ENCODE measurements at regions of chr9 and their contacts with region 1.

Region 1: GRCh38 chr9:129835021-129835871 is at the starts of genes C9orf78 and USP20:
- H3K4me3 Mint-ChIP-seq: peak within 1 kb of the TSS; percentile 88
- H3K27ac Mint-ChIP-seq: peak within 1 kb of the TSS; percentile 93
- H3K4me1 Mint-ChIP-seq: peaks cover 55% of the 10 kb centered on the region
- H3K27me3 Mint-ChIP-seq: no peaks in the 10 kb centered on the region

Region 2: DNA sequence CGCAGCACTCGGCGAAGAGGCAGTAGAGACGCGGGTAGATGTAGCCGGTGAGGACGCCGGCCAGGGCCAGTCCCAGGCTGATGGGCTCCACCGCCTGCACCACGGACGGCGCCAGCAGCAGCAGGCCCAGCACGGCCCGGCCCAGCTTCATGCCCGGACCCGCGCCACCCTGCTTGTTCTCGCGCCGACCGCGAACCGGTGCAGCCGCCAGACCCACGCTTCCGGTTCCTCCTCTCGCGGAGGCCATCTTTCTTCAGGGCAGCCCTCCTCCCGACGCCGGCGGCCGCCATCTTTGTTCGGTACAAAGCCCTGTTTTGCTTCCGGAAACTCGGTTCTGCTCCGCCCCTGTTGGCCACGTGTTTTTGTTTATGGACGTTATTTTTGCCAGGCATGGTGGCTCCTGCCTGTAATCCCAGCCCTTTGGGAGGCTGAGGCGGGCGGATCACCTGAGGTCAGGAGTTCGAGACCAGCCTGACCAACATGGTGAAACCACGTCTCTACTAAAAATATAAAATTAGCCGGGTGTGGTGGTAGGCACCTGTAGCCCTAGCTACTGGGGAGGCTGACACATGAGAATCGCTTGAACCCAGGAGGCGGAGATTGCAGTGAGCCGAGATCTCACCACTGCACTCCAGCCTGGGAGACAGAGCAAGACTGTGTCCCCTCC is 11.2 kb before region 1 on chr9 and contains the start of gene TOR1A:
- intact Hi-C with region 1: loop called (anchors 1 kb)
- H3K4me3 Mint-ChIP-seq: peak within 1 kb of the TSS; percentile 89
- H3K27ac Mint-ChIP-seq: peak within 1 kb of the TSS; percentile 83
- H3K4me1 Mint-ChIP-seq: peaks cover 14% of the 10 kb centered on the region
- H3K27me3 Mint-ChIP-seq: no peaks in the 10 kb centered on the region